ENCODE measurements at regions of chr9 and their contacts with region 1.

Region 1: DNA sequence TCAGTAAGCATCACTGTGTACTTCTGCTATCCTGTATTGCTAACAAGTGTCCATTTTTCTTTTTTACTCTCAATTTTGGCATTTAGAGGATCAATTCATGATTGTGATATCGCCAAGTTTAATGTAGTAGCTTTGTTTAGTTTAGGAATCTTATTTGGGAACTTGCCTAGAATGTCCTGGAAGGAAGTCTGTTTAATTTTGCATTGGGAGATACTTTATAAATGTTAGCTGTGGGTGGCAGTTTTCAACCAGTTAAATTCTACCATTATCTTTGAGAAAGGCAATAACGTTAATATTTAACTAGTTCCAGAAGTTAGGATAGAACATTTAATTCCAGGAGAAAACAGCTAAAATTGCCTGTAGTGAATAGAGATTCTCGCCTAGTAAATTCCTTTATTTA is 78.6 kb downstream of the PBX3 start:
- DNase-seq: no peak
- ATAC-seq: no peak
- H3K4me3 ChIP-seq: no peak overlapping the region
- H3K27ac ChIP-seq: no peak overlapping the region
- H3K4me1 ChIP-seq: peaks cover 7% of the 10 kb centered on the region
- H3K27me3 ChIP-seq: no peaks in the 10 kb centered on the region
- CTCF ChIP-seq: no peak
- EP300 ChIP-seq: no peak
- POLR2A ChIP-seq: no peak
- RAD21 ChIP-seq: no peak

Region 2: GRCh38 chr9:125758986-125759763 is 66.6 kb before region 1 on chr9:
- CTCF ChIA-PET with region 1: no interaction called
- POLR2A ChIA-PET with region 1: no interaction called
- in situ Hi-C with region 1: no loop called
- intact Hi-C with region 1: loop called (anchors 2 kb)
- DNase-seq: peak; percentile 93
- ATAC-seq: peak; percentile 100
- H3K4me3 ChIP-seq: no peak overlapping the region; a peak in 1 of 6 replicates
- H3K27ac ChIP-seq: peak overlapping the region; percentile 44
- H3K4me1 ChIP-seq: peaks cover 48% of the 10 kb centered on the region
- H3K27me3 ChIP-seq: no peaks in the 10 kb centered on the region
- CTCF ChIP-seq: peak; percentile 53
- EP300 ChIP-seq: peak in 1 of 2 experiments; percentile 59; a peak in 1 of 4 replicates
- POLR2A ChIP-seq: no peak
- RAD21 ChIP-seq: peak; percentile 13; the same call in 1 of the 2 replicates